Left colon (tissue), 2 donors: ENCODE measurements at regions of chr12 and their contacts with region 1.

Region 1: DNA sequence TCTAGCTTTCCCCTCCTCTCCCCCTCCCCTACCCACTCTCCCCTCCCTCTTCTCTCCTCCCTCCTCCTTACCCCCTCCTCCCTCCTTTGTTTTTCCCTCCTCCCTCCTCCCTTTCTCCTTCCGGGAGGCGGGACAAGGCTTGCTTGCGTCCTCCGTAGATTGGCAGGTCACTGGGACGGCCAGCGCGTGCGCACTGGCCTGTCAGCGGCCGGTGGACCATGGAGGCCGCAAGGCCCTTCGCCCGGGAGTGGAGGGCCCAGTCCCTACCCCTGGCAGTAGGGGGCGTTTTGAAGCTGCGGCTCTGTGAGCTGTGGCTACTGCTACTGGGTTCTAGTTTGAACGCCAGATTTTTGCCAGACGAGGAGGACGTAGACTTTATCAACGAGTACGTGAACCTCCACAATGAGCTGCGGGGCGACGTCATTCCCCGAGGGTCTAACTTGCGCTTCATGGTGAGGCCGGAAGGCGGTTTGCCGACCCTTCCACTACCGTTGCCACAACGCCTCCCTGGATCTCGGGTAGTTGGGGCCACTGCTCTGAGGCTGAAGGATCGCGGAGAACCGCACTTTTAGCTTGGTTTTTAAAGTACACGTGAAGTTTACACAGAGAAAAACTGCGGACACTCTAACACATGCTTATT is at the start of gene GLIPR1L2:
- DNase-seq: peak; percentile 92 to 94
- ATAC-seq: peak; percentile 100
- total RNA-seq, gene GLIPR1L2: not detected

Region 2: DNA sequence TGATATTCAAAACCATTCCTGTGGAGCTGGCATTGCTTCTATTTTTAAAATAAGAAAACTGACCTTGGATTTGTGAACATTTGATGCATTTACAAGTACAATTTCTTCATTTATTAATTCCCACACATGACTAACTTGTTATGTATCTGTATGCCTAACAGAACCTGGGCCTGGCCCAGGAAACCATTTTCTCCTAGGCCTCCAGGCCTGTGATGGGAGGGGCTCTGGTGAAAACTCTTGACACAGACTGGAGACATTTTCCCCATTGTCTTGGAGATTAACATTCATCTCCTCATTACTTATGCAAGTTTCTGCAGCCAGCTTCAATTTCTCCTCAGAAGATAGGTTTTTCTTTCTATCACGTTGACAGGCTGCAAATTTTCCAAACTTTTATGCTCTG is 41.9 kb after region 1 on chr12:
- intact Hi-C with region 1: no loop called
- DNase-seq: no peak
- ATAC-seq: no peak

Region 3: DNA sequence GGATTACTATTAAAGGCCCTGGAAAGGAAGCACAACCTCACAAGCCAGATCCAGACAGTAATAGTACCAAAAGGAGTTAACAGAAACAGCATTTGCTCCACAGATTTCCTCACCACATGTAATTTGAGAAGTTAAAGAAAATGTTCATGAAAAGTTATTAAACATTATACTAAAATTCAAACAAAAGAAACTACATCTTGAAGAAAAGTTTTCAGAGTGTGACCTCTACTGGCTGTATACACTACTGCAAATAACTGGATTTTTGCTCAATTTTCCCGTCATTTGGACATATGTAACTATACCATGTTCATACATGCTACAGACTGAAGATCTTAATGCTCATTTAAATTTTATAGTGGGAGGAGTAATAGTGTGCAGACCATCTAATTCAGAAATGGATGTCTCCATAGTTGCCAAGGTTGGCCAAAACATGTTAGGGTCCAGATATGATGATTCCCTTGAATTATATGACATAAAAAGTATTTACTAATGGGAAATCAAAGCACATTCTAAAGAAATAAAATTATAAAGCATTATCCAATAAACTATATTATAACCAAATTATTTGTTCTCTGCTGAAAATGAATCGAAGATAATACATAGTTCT is 114.8 kb after region 1 on chr12:
- intact Hi-C with region 1: loop called in 1 of 2 experiments (anchors 10 kb)
- DNase-seq: no peak
- ATAC-seq: no peak

Region 4: GRCh38 chr12:75986001-75986746 is 595.2 kb after region 1 on chr12:
- intact Hi-C with region 1: no loop called
- DNase-seq: no peak
- ATAC-seq: peak; percentile 54